BJ (cell line): ENCODE measurements at regions of chr12 and their contacts with region 1.

Region 1: DNA sequence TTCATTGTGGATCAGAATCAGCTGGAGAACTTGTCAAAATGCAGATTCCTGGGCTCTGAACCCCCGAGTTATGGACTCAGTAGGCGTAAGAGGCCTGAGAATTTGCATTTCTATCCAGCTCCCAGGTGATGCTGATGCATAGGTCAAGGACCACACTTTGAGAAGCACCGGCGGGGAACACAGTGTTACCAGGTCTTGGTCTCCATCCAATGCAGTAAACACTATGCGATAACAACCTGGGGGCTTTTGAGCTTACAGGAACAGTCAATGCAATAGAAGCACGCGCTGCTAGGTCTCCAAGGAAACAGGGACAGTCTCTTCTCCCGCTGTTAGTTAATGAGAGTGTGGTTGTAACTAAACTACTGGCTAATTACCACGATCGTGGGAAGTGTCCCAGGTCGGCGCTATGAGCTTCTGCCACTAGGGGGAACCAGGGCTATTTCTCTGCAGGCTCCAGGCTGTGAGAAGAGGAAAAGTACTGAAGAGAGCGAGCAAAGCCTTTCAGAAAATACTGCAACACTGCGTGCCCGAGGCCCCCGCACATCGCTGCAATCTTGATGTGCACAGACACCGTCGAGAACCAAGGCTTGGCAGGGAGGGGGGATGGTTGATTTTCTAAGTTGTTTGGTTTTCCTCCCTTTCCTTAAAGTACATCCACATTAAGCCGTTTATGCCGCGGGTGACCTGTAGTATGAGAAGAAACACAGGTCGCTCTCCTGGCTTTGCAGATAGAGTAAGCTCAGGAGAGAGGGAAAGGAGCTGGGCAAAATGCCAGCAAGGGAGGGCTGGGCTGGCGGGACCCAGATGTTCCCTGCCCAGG is 52.0 kb upstream of the KCNA1 start:
- DNase-seq: no peak
- H3K4me3 ChIP-seq: no peak overlapping the region
- H3K27me3 ChIP-seq: peaks cover 18% of the 10 kb centered on the region
- CTCF ChIP-seq: peak; percentile 96

Region 2: DNA sequence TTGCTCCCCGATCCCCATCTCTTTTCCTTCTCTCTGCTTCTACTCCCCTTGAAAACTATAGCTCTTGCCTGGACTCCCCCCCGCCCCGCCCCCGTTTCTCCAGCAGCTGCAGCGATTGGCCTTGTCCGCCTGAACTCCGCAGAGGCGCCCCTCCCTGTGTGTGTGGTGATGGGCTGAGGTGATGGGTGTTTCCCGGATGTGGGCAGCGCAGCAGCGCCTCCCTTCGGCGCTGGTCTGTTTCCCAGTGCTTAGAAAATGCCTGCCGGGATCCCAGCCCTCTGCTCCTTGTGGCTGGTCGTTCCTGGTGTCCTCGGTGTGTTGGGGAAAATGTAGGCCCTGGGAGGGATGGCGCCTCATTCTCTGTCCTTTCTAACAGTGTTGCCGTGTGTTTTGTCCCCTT is 94.1 kb before region 1 on chr12:
- CTCF ChIA-PET with region 1: no interaction called
- POLR2A ChIA-PET with region 1: no interaction called
- DNase-seq: no peak
- H3K4me3 ChIP-seq: no peak overlapping the region
- H3K27me3 ChIP-seq: no peaks in the 10 kb centered on the region
- CTCF ChIP-seq: 0 out of 2 replicates have a peak, but pooled peaks have one; percentile 5

Region 3: DNA sequence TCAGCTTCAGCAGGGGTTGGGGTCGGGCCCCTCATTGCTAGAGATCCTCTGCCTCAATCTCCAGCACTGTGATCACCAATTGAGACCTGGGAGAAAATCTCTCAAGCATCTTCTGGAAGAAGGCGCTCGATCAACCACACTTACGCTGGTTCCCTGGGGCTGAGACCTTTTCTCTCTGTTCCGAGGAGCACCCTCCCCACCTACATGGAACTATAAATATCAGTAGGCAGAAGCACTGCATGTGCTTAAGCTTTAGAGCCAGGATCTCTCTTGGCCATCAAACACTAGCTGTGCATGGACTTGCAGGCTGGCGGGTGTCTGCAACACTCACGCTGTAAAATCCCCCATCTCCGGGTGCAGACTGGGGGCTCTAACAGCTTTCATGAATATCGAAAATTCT is 13.8 kb after region 1 on chr12:
- CTCF ChIA-PET with region 1: interaction called, 53 read pairs
- POLR2A ChIA-PET with region 1: no interaction called
- DNase-seq: no peak
- H3K4me3 ChIP-seq: no peak overlapping the region
- H3K27me3 ChIP-seq: no peaks in the 10 kb centered on the region; the same call in 1 of the 2 replicates
- CTCF ChIP-seq: no peak

Region 4: GRCh38 chr12:4934407-4935035 is 76.8 kb after region 1 on chr12:
- CTCF ChIA-PET with region 1: interaction called, 10 read pairs
- POLR2A ChIA-PET with region 1: no interaction called
- DNase-seq: no peak
- H3K4me3 ChIP-seq: no peak overlapping the region
- H3K27me3 ChIP-seq: no peaks in the 10 kb centered on the region
- CTCF ChIP-seq: no peak

Region 5: GRCh38 chr12:5003020-5003666 is 145.5 kb after region 1 on chr12:
- CTCF ChIA-PET with region 1: interaction called, 241 read pairs
- POLR2A ChIA-PET with region 1: no interaction called
- DNase-seq: no peak
- H3K4me3 ChIP-seq: no peak overlapping the region
- H3K27me3 ChIP-seq: no peaks in the 10 kb centered on the region; the same call in 1 of the 2 replicates
- CTCF ChIP-seq: peak; percentile 100

Region 6: DNA sequence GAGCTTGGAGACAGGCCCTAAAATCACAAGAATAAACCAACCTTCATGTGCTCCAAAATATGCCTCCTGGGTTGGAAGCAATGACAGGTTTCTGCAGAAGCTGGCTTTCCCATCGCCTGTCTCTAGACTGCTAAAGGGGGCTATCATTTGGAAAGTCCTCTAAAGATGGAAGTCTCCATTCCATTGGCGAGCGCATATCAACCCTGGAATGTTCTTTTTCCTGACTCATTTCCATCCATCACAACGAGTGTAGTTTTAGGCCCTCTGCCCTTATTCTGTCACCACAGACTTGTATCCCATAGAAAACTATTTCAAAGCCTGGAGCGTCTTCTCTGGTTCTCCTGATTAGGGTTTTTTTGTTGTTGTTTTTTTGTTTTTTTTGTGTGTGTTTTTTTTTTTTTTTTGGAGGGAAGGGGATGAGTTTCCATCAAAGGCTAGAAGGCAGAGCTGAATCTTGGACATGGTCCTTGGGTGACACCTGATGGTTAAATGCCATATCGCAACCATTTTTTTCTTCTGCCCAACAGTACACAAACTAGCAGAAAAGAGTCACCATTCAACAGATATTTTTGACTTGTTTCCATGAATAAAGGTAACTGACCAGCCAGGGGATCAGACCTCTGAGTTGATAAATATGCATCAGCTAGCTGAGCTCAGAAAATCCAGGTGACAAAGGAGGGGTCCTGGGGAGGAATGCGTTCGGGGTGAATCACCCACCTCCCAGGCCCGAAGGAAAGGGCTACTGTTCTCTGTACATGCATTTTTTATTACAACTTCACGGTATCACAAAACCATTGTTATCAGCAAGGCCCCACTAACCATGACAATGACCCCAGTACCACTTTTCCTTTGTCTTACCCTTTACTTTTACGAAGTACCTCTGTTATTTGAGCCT is 226.5 kb after region 1 on chr12:
- CTCF ChIA-PET with region 1: interaction called, 101 read pairs
- POLR2A ChIA-PET with region 1: no interaction called
- DNase-seq: peak; percentile 10
- H3K4me3 ChIP-seq: no peak overlapping the region
- H3K27me3 ChIP-seq: peaks cover 3% of the 10 kb centered on the region; the same call in 1 of the 2 replicates
- CTCF ChIP-seq: peak; percentile 70